IMR-90 (cell line): ENCODE measurements at regions of chr6 and their contacts with region 1.

Region 1: DNA sequence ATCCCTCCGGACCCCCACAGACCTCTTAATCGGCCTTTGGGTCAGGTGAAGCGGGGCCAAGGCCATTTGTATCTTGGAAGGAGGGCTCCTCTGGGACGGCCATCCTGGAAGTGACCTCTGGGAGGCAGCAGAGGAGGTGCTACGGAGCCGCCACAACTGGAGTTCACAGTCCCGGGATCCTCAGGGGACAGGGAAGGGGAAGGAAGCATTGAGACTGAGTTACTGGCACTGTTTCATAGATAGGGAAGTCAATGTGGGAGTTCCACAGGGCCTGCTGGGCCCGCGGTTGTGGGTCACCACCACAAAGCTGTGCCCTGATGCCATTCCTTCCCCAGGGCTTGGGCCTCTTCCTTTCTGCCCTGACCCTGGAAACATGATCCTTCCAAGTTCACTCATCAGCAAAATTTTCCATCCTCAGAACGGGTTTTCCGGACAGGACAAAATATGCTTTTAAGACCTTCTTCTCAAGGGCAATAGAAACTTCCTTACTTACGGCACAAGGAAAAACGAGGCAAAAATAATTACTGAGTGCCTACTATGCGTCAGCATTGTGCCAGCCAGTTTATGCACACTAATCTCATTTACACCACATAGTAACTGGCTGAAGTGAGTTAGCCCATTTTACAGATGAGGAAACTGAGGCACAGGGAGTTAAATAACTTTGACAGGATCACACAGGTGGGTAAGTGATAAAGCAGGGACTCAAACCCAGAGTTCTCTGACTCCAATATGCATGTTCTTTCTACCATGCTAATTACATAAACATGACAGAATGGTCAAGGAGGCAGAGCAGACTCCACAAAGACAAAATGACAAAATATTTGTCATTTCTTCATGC is 143.8 kb downstream of the UNC5CL start:
- DNase-seq: peak; percentile 54
- ATAC-seq: peak; percentile 99
- H3K4me3 ChIP-seq: no peak overlapping the region
- H3K27ac ChIP-seq: no peak overlapping the region
- H3K4me1 ChIP-seq: no peaks in the 10 kb centered on the region
- H3K27me3 ChIP-seq: peaks cover 23% of the 10 kb centered on the region
- CTCF ChIP-seq: peak; percentile 86
- POLR2A ChIP-seq: 0 out of 2 replicates have a peak, but pooled peaks have one; percentile 40
- RAD21 ChIP-seq: peak; percentile 94

Region 2: DNA sequence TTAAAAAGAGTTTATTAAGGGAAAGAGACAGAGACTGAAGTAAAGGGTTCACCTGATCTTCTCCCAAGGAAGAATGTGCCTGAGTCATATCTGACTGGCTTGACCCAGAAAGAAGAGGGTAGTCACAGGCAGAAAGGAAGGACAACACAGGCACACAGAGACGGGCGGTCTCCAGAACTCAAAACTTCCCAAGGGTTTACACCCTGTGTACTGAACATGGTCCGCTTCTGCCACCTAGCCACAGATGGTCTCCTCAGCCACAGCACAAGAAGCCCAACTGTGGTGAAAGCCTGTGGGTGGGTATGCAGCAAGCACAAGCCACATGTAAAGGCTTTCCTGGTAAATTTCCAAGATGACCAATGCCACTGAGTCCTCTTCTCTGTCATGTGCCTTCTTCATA is 126.7 kb after region 1 on chr6:
- CTCF ChIA-PET with region 1: interaction called, 24 read pairs
- POLR2A ChIA-PET with region 1: no interaction called
- dilution Hi-C with region 1: no loop called
- in situ Hi-C with region 1: loop called (anchors 5 kb)
- intact Hi-C with region 1: no loop called
- DNase-seq: peak; percentile 46
- ATAC-seq: peak; percentile 48; the same call in 1 of the 2 replicates
- H3K4me3 ChIP-seq: no peak overlapping the region
- H3K27ac ChIP-seq: no peak overlapping the region
- H3K4me1 ChIP-seq: no peaks in the 10 kb centered on the region
- H3K27me3 ChIP-seq: peaks cover 11% of the 10 kb centered on the region
- CTCF ChIP-seq: peak; percentile 51
- POLR2A ChIP-seq: no peak
- RAD21 ChIP-seq: peak; percentile 59

Region 3: GRCh38 chr6:41039060-41039998 is 144.1 kb after region 1 on chr6 and contains the start of gene UNC5CL:
- CTCF ChIA-PET with region 1: interaction called, 11 read pairs
- POLR2A ChIA-PET with region 1: no interaction called
- dilution Hi-C with region 1: no loop called
- in situ Hi-C with region 1: no loop called
- intact Hi-C with region 1: no loop called
- DNase-seq: no peak
- ATAC-seq: peak; percentile 78
- H3K4me3 ChIP-seq: no peak within 1 kb of the TSS
- H3K27ac ChIP-seq: no peak within 1 kb of the TSS
- H3K4me1 ChIP-seq: no peaks in the 10 kb centered on the region
- H3K27me3 ChIP-seq: peaks cover 14% of the 10 kb centered on the region
- CTCF ChIP-seq: peak; percentile 59
- POLR2A ChIP-seq: no peak
- RAD21 ChIP-seq: 0 out of 2 replicates have a peak, but pooled peaks have one; percentile 31
- total RNA-seq, gene UNC5CL: not detected in 2 replicates

Region 4: DNA sequence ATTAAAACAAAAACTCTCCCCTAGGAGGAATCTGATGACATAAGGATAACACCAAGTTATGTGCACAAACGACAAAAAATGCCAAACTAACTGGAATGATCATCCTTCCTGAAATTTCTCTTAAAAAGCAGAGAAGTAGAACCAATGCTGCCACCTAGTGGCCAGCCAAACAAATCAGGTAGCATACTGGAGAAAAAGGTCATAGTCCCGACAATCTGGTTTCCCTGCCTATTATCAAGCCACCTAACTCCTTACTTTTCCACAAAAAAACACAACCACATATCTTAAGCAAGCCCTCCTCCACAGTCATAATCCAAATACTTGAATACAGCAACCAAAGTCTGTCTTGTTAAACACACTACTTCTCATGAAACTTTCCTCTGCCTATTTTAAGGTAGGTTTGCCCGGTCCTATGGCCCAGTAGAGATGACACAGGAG is 171.7 kb after region 1 on chr6:
- CTCF ChIA-PET with region 1: no interaction called
- POLR2A ChIA-PET with region 1: no interaction called
- dilution Hi-C with region 1: no loop called
- in situ Hi-C with region 1: no loop called
- intact Hi-C with region 1: loop called (anchors 1 kb)
- DNase-seq: peak; percentile 84
- ATAC-seq: peak; percentile 40; the same call in 1 of the 2 replicates
- H3K4me3 ChIP-seq: no peak overlapping the region
- H3K27ac ChIP-seq: no peak overlapping the region
- H3K4me1 ChIP-seq: no peaks in the 10 kb centered on the region
- H3K27me3 ChIP-seq: no peaks in the 10 kb centered on the region
- CTCF ChIP-seq: peak; percentile 79
- POLR2A ChIP-seq: no peak
- RAD21 ChIP-seq: peak; percentile 78